ENCODE measurements at regions of chr17 and their contacts with region 1.

Region 1: GRCh38 chr17:28834420-28834819 is 8.2 kb downstream of the FAM222B start:
- DNase-seq: no peak
- ATAC-seq: no peak
- H3K4me3 ChIP-seq: no peak overlapping the region
- H3K27ac ChIP-seq: no peak overlapping the region
- H3K4me1 ChIP-seq: peaks cover 0 to 2% (median 0%) of the 10 kb centered on the region in 12 donors
- H3K27me3 ChIP-seq: no peaks in the 10 kb centered on the region
- CTCF ChIP-seq: no peak
- POLR2A ChIP-seq: no peak

Region 2: DNA sequence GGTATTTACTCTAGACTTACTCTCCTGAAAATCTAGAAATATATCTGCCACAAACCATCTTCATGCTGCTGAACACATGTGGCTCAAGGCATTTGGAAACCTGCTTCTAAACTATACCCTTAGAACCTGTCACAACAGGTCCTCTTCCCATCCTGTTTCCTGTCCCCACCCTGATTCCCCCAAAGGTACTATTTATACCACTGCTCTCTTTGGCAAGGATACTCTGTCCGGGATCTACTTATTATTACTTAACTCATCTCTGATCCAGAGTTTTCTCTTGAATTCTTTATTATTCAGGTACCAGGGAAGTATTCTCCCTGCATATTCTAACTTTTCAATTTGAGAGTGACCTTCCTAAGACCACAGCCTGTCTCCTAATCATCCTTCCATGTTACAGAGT is 57.2 kb before region 1 on chr17:
- intact Hi-C with region 1: loop called in 2 of 10 experiments (anchors 5 to 10 kb)
- DNase-seq: no peak
- ATAC-seq: peak in 1 of 4 donors; percentile 62
- H3K4me3 ChIP-seq: no peak overlapping the region
- H3K27ac ChIP-seq: peak overlapping the region in 1 of 12 donors; percentile 1
- H3K4me1 ChIP-seq: peaks cover 0 to 17% (median 10%) of the 10 kb centered on the region in 12 donors
- H3K27me3 ChIP-seq: no peaks in the 10 kb centered on the region
- CTCF ChIP-seq: no peak
- POLR2A ChIP-seq: no peak